ENCODE measurements at regions of chr1 and their contacts with region 1.

Region 1: GRCh38 chr1:202348509-202349205 is at the start of gene PPP1R12B:
- DNase-seq: peak; percentile 88
- H3K4me3 ChIP-seq: peak within 1 kb of the TSS; percentile 84 to 97 (median 97)
- H3K27ac ChIP-seq: peak within 1 kb of the TSS; percentile 89 to 96 (median 94)
- H3K4me1 ChIP-seq: peaks cover 3 to 18% (median 13%) of the 10 kb centered on the region in 3 donors
- H3K27me3 ChIP-seq: no peaks in the 10 kb centered on the region
- CTCF ChIP-seq: no peak
- POLR2A ChIP-seq: peak in 2 of 4 donors; percentile 6 to 57
- total RNA-seq, gene PPP1R12B: 20.6 to 120 (median 36.9) TPM

Region 2: DNA sequence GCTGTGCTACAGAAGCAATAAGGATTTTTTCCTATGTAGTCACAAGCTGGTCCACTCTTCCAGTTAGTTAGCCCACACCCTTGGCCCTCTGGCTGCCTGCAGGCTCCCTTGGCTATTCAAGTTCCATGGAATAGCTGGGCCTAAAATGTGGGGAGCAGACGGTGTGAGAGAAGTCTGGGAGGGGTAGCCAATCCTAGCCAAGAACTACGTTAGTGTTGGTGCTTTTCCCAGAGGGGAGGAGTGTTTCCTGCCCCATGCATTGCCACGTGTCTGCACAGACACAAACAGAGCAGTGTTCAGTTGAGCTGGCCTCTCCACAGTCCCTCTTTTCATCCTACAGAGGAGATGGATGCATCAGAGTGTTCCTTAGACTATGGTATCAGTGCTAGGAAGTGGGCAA is 578.7 kb before region 1 on chr1:
- intact Hi-C with region 1: no loop called
- DNase-seq: no peak
- H3K4me3 ChIP-seq: no peak overlapping the region
- H3K27ac ChIP-seq: peak overlapping the region in 1 of 4 donors; percentile 6
- H3K4me1 ChIP-seq: peaks cover 0 to 27% (median 16%) of the 10 kb centered on the region in 3 donors
- H3K27me3 ChIP-seq: no peaks in the 10 kb centered on the region
- CTCF ChIP-seq: no peak
- POLR2A ChIP-seq: no peak

Region 3: GRCh38 chr1:202710070-202711045 is 361.7 kb after region 1 on chr1 and contains the start of gene SYT2:
- intact Hi-C with region 1: loop called (anchors 10 kb)
- DNase-seq: no peak
- H3K4me3 ChIP-seq: peak within 1 kb of the TSS; percentile 9 to 54 (median 29)
- H3K27ac ChIP-seq: no peak within 1 kb of the TSS
- H3K4me1 ChIP-seq: peaks cover 11 to 28% (median 16%) of the 10 kb centered on the region in 3 donors
- H3K27me3 ChIP-seq: peaks cover 13 to 87% (median 19%) of the 10 kb centered on the region in 4 donors
- CTCF ChIP-seq: no peak
- POLR2A ChIP-seq: no peak
- total RNA-seq, gene SYT2: not detected